ENCODE measurements at regions of chr1 and their contacts with region 1.

Region 1: GRCh38 chr1:37434292-37434907 is 40.0 kb upstream of the ZC3H12A start:
- DNase-seq: peak; percentile 90
- H3K4me3 ChIP-seq: no peak overlapping the region; a peak in 1 of 4 replicates
- H3K27ac ChIP-seq: no peak overlapping the region
- H3K4me1 ChIP-seq: no peaks in the 10 kb centered on the region
- H3K27me3 ChIP-seq: peaks cover 19% of the 10 kb centered on the region; the same call in 1 of the 2 replicates
- CTCF ChIP-seq: peak; percentile 94
- EP300 ChIP-seq: no peak
- RAD21 ChIP-seq: peak; percentile 93

Region 2: DNA sequence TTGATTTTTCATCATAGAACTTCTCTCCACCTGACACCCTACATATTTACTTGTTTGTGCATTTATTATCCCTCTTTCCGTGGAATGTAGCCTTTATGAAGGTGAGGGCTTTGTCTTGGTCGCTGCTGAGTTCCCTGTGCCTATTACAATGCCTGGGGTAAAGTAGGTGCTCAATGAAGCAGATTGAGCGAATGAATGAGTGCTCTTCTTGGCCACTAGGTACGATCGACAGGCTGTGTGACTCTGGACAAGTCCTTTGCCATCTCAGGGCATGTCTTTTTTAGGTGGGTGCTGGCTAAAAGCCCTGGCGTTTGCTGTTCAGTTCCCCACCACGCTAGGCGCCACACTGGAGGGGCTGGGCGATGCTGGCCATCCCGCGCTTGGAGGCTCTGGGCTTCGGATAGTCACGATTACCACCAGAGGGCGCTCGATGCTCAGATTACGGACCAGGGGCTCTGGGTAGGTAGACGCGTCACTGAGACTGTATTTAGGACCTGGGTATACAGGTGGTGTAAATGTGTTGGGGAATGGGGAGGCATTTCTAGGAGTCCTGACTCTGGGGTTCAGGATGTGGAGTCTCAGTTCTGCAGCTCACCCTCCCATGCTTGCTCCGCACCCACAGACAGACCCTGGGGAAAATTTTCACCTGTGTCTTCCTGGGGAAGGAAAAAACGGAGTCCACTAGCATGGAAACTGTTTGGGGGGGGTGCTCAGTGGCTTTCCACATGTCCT is 880.6 kb before region 1 on chr1:
- CTCF ChIA-PET with region 1: interaction called, 19 read pairs
- POLR2A ChIA-PET with region 1: no interaction called
- DNase-seq: peak; percentile 83
- H3K4me3 ChIP-seq: peak overlapping the region in 1 of 2 experiments; percentile 20; a peak in 1 of 4 replicates
- H3K27ac ChIP-seq: no peak overlapping the region
- H3K4me1 ChIP-seq: no peaks in the 10 kb centered on the region
- H3K27me3 ChIP-seq: no peaks in the 10 kb centered on the region
- CTCF ChIP-seq: peak; percentile 73
- EP300 ChIP-seq: no peak
- RAD21 ChIP-seq: peak; percentile 86

Region 3: DNA sequence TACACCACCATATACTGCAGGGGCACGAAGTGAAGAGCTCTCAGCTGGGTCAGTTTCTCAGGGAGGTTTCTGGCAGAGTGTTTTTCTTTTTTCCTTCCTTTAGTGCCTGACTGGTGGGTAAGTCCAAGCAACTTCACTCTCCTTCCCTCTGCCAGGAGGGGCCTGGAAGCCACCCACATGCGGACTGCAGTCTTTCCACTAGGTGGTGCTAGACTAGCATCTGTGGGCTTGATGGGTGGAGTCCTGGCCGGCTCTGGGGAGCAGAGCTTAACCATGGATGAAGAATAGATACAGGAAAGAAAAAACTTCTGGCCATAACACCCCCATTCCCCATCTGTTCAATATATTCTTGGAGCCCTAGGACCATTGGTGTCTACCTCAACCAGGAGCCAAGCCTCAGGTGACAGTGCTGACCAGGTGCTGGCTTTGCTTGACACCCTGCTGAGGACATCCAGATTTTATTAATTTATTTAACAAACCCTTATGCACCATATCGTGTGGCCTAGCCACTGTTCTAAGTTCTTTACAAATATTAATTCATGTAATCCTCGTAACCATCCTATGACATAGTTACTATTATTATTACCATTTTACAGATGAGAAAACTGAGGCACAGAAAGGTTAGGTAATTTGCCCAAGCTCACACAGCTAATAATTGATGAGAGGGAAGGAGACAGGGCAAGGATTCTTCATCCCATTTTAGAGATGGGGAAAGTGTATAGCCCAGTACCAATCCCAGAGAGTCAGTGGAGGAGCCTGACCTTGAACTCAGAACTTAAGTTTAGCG is 825.0 kb before region 1 on chr1:
- CTCF ChIA-PET with region 1: interaction called, 11 read pairs
- POLR2A ChIA-PET with region 1: no interaction called
- DNase-seq: peak; percentile 81
- H3K4me3 ChIP-seq: peak overlapping the region in 1 of 2 experiments; percentile 55; a peak in 1 of 4 replicates
- H3K27ac ChIP-seq: no peak overlapping the region
- H3K4me1 ChIP-seq: no peaks in the 10 kb centered on the region
- H3K27me3 ChIP-seq: no peaks in the 10 kb centered on the region
- CTCF ChIP-seq: peak; percentile 66
- EP300 ChIP-seq: no peak
- RAD21 ChIP-seq: peak; percentile 81

Region 4: GRCh38 chr1:37423810-37424209 is 10.6 kb before region 1 on chr1:
- CTCF ChIA-PET with region 1: interaction called, 30 read pairs
- POLR2A ChIA-PET with region 1: no interaction called
- DNase-seq: no peak
- H3K4me3 ChIP-seq: no peak overlapping the region
- H3K27ac ChIP-seq: no peak overlapping the region
- H3K4me1 ChIP-seq: no peaks in the 10 kb centered on the region
- H3K27me3 ChIP-seq: no peaks in the 10 kb centered on the region
- CTCF ChIP-seq: no peak
- EP300 ChIP-seq: no peak
- RAD21 ChIP-seq: no peak

Region 5: DNA sequence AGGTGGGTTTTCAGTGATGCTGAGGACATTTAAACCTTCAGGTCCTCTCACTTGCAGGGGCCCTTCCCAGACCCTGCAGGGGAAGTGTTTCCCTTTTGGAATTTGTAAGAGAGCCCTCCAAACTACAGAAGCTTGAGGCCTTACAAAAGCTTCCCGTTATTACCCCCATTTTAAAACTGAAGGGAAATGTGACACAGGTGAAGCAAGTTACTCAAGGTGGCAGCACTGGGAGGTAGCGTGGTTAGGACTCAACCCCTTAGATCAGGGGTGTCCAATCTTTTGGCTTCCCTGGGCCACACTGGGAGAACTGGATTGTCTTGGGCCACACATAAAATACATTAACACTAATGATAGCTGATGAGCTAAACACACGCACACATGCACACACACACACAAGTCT is 24.1 kb after region 1 on chr1:
- CTCF ChIA-PET with region 1: interaction called, 18 read pairs
- POLR2A ChIA-PET with region 1: no interaction called
- DNase-seq: no peak
- H3K4me3 ChIP-seq: no peak overlapping the region
- H3K27ac ChIP-seq: no peak overlapping the region
- H3K4me1 ChIP-seq: no peaks in the 10 kb centered on the region; a peak in 1 of 4 replicates
- H3K27me3 ChIP-seq: no peaks in the 10 kb centered on the region
- CTCF ChIP-seq: no peak
- EP300 ChIP-seq: no peak
- RAD21 ChIP-seq: no peak

Region 6: DNA sequence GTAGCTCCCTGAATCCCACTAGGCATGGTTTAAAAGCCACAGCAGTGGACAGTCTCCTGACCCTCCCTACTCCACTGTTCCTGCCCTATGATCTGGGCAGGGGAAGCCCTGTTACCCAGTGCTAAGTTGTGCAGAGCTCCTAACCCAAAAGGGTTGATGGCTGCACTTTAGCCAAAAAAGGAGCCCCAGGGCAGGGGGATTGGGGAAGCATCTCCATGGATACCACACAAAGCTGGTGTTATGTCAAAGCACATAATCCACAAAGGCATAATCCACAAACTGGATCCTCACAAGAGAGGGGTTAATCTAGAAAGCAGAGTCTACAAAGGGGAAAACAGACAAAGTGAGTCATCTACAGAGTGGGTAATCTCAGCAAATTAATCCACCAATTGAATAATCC is 194.6 kb after region 1 on chr1:
- CTCF ChIA-PET with region 1: no interaction called
- POLR2A ChIA-PET with region 1: no interaction called
- DNase-seq: no peak
- H3K4me3 ChIP-seq: no peak overlapping the region
- H3K27ac ChIP-seq: no peak overlapping the region
- H3K4me1 ChIP-seq: no peaks in the 10 kb centered on the region; a peak in 1 of 4 replicates
- H3K27me3 ChIP-seq: peaks cover 65% of the 10 kb centered on the region
- CTCF ChIP-seq: no peak
- EP300 ChIP-seq: no peak
- RAD21 ChIP-seq: no peak